ENCODE measurements at regions of chr21 and their contacts with region 1.

Region 1: GRCh38 chr21:36337099-36337509 is 17.1 kb downstream of the MORC3 start:
- DNase-seq: no peak
- H3K4me3 ChIP-seq: no peak overlapping the region
- H3K27ac ChIP-seq: no peak overlapping the region
- H3K4me1 ChIP-seq: no peaks in the 10 kb centered on the region
- H3K27me3 ChIP-seq: no peaks in the 10 kb centered on the region
- CTCF ChIP-seq: no peak
- POLR2A ChIP-seq: no peak

Region 2: GRCh38 chr21:36127977-36128376 is 209.1 kb before region 1 on chr21:
- intact Hi-C with region 1: loop called (anchors 2 kb)
- DNase-seq: no peak
- H3K4me3 ChIP-seq: no peak overlapping the region
- H3K27ac ChIP-seq: no peak overlapping the region
- H3K4me1 ChIP-seq: no peaks in the 10 kb centered on the region
- H3K27me3 ChIP-seq: no peaks in the 10 kb centered on the region
- CTCF ChIP-seq: no peak
- POLR2A ChIP-seq: no peak

Measured in uterus (tissue), 4 donors.